Activated T-helper 1 cell treated with anti-CD3 and anti-CD28 coated beads, Interleukin-12 subunit alpha, Interleukin-12 subunit beta, Interleukin-2, Interleukin-4 antibody, amounts not matched to agents 30 ng/mL and 10 ng/mL and 1 ng/mL, durations not matched to agents 14 hours and 24 hours and 36 hours (primary cell): ENCODE measurements at regions of chr1 and their contacts with region 1.

Region 1: GRCh38 chr1:155277070-155277895 is at the start of gene HCN3:
- DNase-seq: peak; percentile 91
- H3K4me3 Mint-ChIP-seq: peak within 1 kb of the TSS; percentile 83
- H3K27ac Mint-ChIP-seq: peak within 1 kb of the TSS; percentile 62
- H3K4me1 Mint-ChIP-seq: peaks cover 38% of the 10 kb centered on the region
- H3K27me3 Mint-ChIP-seq: peaks cover 7% of the 10 kb centered on the region
- total RNA-seq, gene HCN3: 2.5 and 3.3 TPM in 2 replicates

Region 2: GRCh38 chr1:154955718-154956543 is 321.4 kb before region 1 on chr1 and contains the start of gene PBXIP1:
- intact Hi-C with region 1: no loop called
- DNase-seq: peak; percentile 86
- H3K4me3 Mint-ChIP-seq: peak within 1 kb of the TSS; percentile 94
- H3K27ac Mint-ChIP-seq: peak within 1 kb of the TSS; percentile 100
- H3K4me1 Mint-ChIP-seq: peaks cover 65% of the 10 kb centered on the region
- H3K27me3 Mint-ChIP-seq: peaks cover 2% of the 10 kb centered on the region
- total RNA-seq, gene PBXIP1: 25.1 and 27.9 TPM in 2 replicates

Region 3: GRCh38 chr1:155227261-155228095 is 49.8 kb before region 1 on chr1:
- intact Hi-C with region 1: loop called (anchors 2 kb)
- DNase-seq: peak; percentile 98
- H3K4me3 Mint-ChIP-seq: peak overlapping the region; percentile 95
- H3K27ac Mint-ChIP-seq: peak overlapping the region; percentile 92
- H3K4me1 Mint-ChIP-seq: peaks cover 15% of the 10 kb centered on the region
- H3K27me3 Mint-ChIP-seq: no peaks in the 10 kb centered on the region

Region 4: GRCh38 chr1:155250633-155251449 is 26.4 kb before region 1 on chr1:
- intact Hi-C with region 1: loop called (anchors 1 kb)
- DNase-seq: peak; percentile 92
- H3K4me3 Mint-ChIP-seq: peak overlapping the region; percentile 12
- H3K27ac Mint-ChIP-seq: no peak overlapping the region
- H3K4me1 Mint-ChIP-seq: peaks cover 32% of the 10 kb centered on the region
- H3K27me3 Mint-ChIP-seq: no peaks in the 10 kb centered on the region

Region 5: DNA sequence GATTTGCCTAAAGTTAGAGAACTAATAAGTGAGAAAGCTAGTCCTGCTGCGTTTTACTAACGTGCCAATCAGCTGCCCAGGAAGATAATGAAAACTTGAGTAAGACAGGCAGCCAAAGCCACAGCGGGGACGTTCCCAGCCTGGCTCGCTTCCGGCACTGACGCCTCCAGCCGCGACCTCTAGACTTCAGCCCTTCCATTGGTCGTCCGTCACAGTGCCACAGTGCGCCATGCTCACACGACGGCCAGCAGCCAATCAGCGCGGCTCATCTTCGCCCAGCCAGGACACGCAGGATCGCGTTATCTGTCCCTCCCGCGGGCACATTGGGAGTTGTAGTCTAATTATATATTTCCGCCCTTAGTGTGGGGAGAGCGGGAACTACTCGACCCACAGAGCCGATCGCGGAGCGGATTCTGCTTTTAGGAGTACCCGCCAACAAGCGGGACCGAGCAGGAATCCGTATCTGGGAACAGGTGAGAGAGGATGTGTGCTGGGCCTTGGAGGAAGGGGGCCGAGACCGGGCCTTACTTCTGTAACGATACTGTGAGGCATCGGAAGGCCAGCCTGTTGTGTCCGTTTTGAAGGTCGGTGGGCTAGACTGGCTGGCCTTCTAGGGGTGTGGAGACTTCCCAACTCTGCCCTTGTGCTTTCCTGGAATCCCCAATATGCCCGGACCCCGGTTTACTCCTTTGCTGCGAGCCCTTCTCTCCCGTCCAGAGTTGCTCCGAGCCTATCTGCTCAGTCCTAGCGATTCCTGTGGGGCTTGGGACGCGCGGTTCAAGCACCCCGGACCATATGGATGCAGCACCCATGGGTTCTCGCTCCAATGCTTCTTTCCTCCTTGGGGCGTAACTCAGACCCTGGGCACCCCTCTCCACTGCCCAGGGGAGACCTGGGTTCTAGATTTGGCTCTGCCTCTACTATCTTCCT is 31.5 kb after region 1 on chr1 and contains the start of gene FDPS:
- intact Hi-C with region 1: loop called (anchors 1 kb)
- DNase-seq: peak; percentile 98
- H3K4me3 Mint-ChIP-seq: peak within 1 kb of the TSS; percentile 92
- H3K27ac Mint-ChIP-seq: peak within 1 kb of the TSS; percentile 93
- H3K4me1 Mint-ChIP-seq: peaks cover 38% of the 10 kb centered on the region
- H3K27me3 Mint-ChIP-seq: no peaks in the 10 kb centered on the region
- total RNA-seq, gene FDPS: 274 and 289 TPM in 2 replicates

Region 6: GRCh38 chr1:155569988-155570592 is 292.8 kb after region 1 on chr1:
- intact Hi-C with region 1: no loop called
- DNase-seq: no peak
- H3K4me3 Mint-ChIP-seq: no peak overlapping the region
- H3K27ac Mint-ChIP-seq: no peak overlapping the region
- H3K4me1 Mint-ChIP-seq: peaks cover 7% of the 10 kb centered on the region
- H3K27me3 Mint-ChIP-seq: no peaks in the 10 kb centered on the region

Region 7: DNA sequence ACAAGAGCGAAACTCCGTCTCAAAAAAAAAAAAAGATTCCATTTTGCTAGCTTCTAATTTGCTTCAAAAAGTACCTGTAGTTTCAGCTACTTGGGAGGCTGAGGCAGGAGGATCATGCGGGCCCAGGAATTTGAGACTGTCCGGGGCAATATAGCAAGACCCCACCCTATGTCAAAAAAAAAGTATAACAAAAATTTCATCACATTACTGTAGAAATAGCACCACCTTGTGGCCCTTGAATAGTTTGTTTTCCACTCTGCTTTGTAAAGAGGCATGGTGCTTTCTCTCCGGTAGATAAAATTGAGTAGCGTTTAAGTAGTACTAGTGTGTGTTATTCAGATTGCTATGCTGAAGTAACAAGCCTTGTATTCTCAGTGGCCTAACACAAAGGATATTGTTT is 314.5 kb after region 1 on chr1:
- intact Hi-C with region 1: loop called (anchors 1 kb)
- DNase-seq: peak; percentile 25
- H3K4me3 Mint-ChIP-seq: no peak overlapping the region
- H3K27ac Mint-ChIP-seq: no peak overlapping the region
- H3K4me1 Mint-ChIP-seq: peaks cover 4% of the 10 kb centered on the region
- H3K27me3 Mint-ChIP-seq: no peaks in the 10 kb centered on the region